OCI-LY7 (cell line): ENCODE measurements at regions of chr19 and their contacts with region 1.

Region 1: DNA sequence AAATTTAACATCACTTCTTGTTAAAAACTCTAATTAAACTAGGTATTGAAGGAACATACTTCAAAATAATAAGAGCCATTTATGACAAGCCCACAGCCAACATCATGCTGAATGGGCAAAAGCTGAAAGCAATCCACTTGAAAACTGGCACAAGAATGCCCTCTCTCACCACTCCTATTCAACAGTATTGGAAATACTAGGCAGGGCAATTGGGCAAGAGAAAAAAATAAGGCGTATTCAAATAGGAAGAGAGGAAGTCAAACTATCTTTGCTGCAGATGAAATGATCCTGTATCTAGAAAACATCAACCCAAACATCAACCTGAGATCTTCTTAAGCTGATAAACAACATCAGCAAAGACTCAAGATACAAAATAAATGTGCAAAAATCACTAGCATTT is 15.6 kb upstream of the LILRB1 start:
- DNase-seq: no peak
- H3K4me3 ChIP-seq: no peak overlapping the region
- H3K27ac ChIP-seq: no peak overlapping the region
- H3K4me1 ChIP-seq: no peaks in the 10 kb centered on the region
- CTCF ChIP-seq: no peak

Region 2: GRCh38 chr19:54541712-54542111 is 73.0 kb before region 1 on chr19:
- CTCF ChIA-PET with region 1: no interaction called
- POLR2A ChIA-PET with region 1: no interaction called
- intact Hi-C with region 1: no loop called
- DNase-seq: peak; percentile 8
- H3K4me3 ChIP-seq: no peak overlapping the region
- H3K27ac ChIP-seq: no peak overlapping the region
- H3K4me1 ChIP-seq: no peaks in the 10 kb centered on the region
- CTCF ChIP-seq: no peak

Region 3: GRCh38 chr19:54573330-54573872 is 41.3 kb before region 1 on chr19 and contains the start of gene LILRA2:
- CTCF ChIA-PET with region 1: no interaction called
- POLR2A ChIA-PET with region 1: no interaction called
- intact Hi-C with region 1: loop called (anchors 1 kb)
- DNase-seq: peak; percentile 52
- H3K4me3 ChIP-seq: peak within 1 kb of the TSS; percentile 22
- H3K27ac ChIP-seq: peak within 1 kb of the TSS; percentile 33
- H3K4me1 ChIP-seq: peaks cover 22% of the 10 kb centered on the region
- CTCF ChIP-seq: no peak
- total RNA-seq, gene LILRA2: 0.38 and 0.44 TPM in 2 replicates

Region 4: DNA sequence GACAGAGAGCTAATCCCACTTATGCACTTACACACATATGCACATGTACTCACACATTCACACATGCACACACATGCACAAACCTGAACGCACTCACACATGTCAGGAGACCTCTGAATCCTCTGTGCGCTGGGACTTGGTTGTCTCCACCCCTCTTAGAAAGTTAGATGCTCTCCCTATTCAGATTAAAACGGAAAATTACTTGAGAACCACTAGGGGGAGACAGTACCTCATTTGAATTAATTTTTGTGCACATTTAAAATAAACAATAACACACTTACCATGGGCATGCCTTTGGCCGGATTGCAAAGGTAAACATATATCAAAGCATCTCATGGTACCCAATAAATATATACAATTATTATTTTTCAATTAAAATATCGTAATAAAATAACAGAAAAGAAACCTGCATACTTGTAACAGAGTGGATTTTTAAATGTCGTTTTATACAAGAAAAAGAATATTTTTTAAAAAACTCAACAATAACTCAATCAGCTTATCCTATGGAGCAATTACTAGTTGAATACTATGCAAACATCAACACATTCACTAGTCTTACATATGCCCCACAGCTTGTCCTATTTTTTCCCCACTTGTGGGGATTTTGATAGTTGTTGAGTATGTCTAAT is 38.6 kb after region 1 on chr19:
- CTCF ChIA-PET with region 1: no interaction called
- POLR2A ChIA-PET with region 1: no interaction called
- intact Hi-C with region 1: no loop called
- DNase-seq: peak; percentile 51
- H3K4me3 ChIP-seq: no peak overlapping the region
- H3K27ac ChIP-seq: no peak overlapping the region
- H3K4me1 ChIP-seq: no peaks in the 10 kb centered on the region
- CTCF ChIP-seq: peak; percentile 88

Region 5: GRCh38 chr19:54674021-54674617 is 59.4 kb after region 1 on chr19:
- CTCF ChIA-PET with region 1: no interaction called
- POLR2A ChIA-PET with region 1: no interaction called
- intact Hi-C with region 1: no loop called
- DNase-seq: peak; percentile 63
- H3K4me3 ChIP-seq: no peak overlapping the region
- H3K27ac ChIP-seq: no peak overlapping the region
- H3K4me1 ChIP-seq: no peaks in the 10 kb centered on the region
- CTCF ChIP-seq: peak; percentile 92